AG04450 (cell line): ENCODE measurements at regions of chr10 and their contacts with region 1.

Region 1: GRCh38 chr10:28241741-28242399 is 61.0 kb downstream of the MPP7 start:
- DNase-seq: peak; percentile 33
- H3K4me3 ChIP-seq: no peak overlapping the region
- H3K27ac ChIP-seq: no peak overlapping the region
- H3K27me3 ChIP-seq: peaks cover 6% of the 10 kb centered on the region
- CTCF ChIP-seq: peak; percentile 94

Region 2: GRCh38 chr10:27446091-27446918 is 795.6 kb before region 1 on chr10:
- CTCF ChIA-PET with region 1: interaction called, 17 read pairs
- POLR2A ChIA-PET with region 1: no interaction called
- DNase-seq: peak; percentile 10
- H3K4me3 ChIP-seq: no peak overlapping the region
- H3K27ac ChIP-seq: no peak overlapping the region
- H3K27me3 ChIP-seq: no peaks in the 10 kb centered on the region
- CTCF ChIP-seq: peak; percentile 52

Region 3: GRCh38 chr10:27742195-27743011 is 499.5 kb before region 1 on chr10:
- CTCF ChIA-PET with region 1: interaction called, 63 read pairs
- POLR2A ChIA-PET with region 1: no interaction called
- DNase-seq: peak; percentile 68
- H3K4me3 ChIP-seq: peak overlapping the region; percentile 57
- H3K27ac ChIP-seq: peak overlapping the region; percentile 88
- H3K27me3 ChIP-seq: peaks cover 54% of the 10 kb centered on the region
- CTCF ChIP-seq: peak; percentile 74

Region 4: DNA sequence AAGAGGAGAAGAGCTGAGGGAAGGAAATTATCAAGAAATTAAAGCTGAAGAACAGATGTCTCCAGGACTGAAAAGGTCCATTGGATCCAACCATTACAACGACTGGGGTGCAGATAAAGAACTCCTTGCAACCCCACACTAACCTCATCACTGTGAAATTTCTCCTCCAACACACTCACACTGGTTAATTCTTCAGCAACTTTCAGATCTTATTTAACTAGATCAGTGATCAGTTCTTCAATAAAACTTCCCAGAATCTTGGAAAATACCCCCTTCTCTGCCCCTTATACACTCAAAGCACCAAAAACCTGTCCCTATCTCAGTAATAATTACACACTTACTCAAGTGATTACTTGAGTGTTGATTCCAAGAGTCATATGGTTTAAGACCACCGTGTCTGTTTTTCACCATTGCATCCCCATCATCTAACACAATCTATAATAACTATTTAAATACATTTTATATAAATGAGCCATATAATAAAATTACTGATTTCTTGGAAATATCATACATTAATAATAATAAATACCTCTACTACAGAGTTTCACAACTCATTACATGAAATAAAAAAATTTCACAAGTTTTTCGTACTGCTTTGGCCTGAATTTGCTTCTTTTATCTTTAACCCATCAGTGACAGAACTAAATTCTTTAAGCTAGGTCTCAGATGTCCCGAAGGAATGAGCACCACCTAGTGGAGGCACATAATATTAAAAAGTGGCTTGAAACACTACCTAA is 62.7 kb before region 1 on chr10:
- CTCF ChIA-PET with region 1: interaction called, 13 read pairs
- POLR2A ChIA-PET with region 1: no interaction called
- DNase-seq: peak; percentile 41
- H3K4me3 ChIP-seq: no peak overlapping the region
- H3K27ac ChIP-seq: no peak overlapping the region
- H3K27me3 ChIP-seq: no peaks in the 10 kb centered on the region
- CTCF ChIP-seq: peak; percentile 76

Region 5: GRCh38 chr10:28263136-28263820 is 21.4 kb after region 1 on chr10:
- CTCF ChIA-PET with region 1: no interaction called
- POLR2A ChIA-PET with region 1: no interaction called
- DNase-seq: no peak
- H3K4me3 ChIP-seq: no peak overlapping the region
- H3K27ac ChIP-seq: no peak overlapping the region
- H3K27me3 ChIP-seq: peaks cover 14% of the 10 kb centered on the region
- CTCF ChIP-seq: no peak

Region 6: DNA sequence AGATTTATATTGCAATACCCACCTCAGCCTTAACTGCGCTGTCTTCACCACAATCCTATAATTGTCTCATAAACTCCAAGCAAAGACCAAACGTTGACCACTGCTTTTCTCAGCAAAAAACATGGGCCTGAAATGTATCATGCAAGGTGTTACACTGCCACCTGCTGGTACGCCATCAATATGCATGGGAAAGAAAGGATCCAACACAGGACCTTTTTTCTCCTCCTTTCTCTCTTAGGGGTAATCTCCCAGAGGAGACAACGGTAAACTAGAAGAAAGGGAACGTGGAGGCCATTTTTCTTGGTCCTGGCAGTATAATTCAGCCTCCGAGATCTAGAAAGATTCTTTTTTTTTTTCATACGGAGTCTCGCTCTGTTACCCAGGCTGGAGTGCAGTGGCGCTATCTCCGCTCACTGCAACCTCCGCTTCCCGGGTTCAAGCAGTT is 140.1 kb after region 1 on chr10:
- CTCF ChIA-PET with region 1: interaction called, 45 read pairs
- POLR2A ChIA-PET with region 1: no interaction called
- DNase-seq: peak; percentile 81
- H3K4me3 ChIP-seq: no peak overlapping the region
- H3K27ac ChIP-seq: no peak overlapping the region
- H3K27me3 ChIP-seq: peaks cover 12% of the 10 kb centered on the region
- CTCF ChIP-seq: peak; percentile 99

Region 7: DNA sequence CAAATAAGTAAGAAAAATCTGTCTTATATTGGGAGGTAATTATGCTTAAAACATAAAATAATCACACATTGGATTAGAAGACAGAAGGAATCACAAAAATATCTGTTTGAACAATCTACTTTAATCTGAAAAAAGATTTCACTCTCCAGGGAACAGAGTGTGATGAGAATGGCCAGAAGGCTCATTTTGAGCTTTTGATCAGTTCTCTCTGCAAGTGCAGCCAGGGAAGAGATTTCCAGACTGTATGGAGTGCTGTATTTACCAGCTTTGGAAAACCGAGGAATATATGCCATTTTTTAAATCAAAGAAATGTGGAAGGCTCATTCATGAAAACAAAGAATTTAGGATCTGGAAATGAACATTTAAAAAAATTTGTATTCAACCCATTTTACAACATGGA is 208.1 kb after region 1 on chr10:
- CTCF ChIA-PET with region 1: no interaction called
- POLR2A ChIA-PET with region 1: no interaction called
- DNase-seq: no peak
- H3K4me3 ChIP-seq: no peak overlapping the region
- H3K27ac ChIP-seq: no peak overlapping the region
- H3K27me3 ChIP-seq: peaks cover 4% of the 10 kb centered on the region
- CTCF ChIP-seq: no peak